ENCODE measurements at regions of chr6 and their contacts with region 1.

Region 1: GRCh38 chr6:160400446-160400845 is 52.3 kb downstream of the SLC22A3 start:
- DNase-seq: no peak
- CTCF ChIP-seq: no peak

Region 2: GRCh38 chr6:160357088-160357487 is 43.4 kb before region 1 on chr6:
- CTCF ChIA-PET with region 1: no interaction called
- POLR2A ChIA-PET with region 1: interaction called, 10 read pairs
- DNase-seq: no peak
- CTCF ChIP-seq: no peak